MCF 10A (cell line): ENCODE measurements at regions of chr9 and their contacts with region 1.

Region 1: GRCh38 chr9:33510264-33511183 is 13.5 kb upstream of the ANKRD18B start:
- DNase-seq: peak; percentile 46
- H3K4me3 Mint-ChIP-seq: peak overlapping the region; percentile 76
- H3K27ac Mint-ChIP-seq: peak overlapping the region; percentile 98
- H3K4me1 Mint-ChIP-seq: peaks cover 21% of the 10 kb centered on the region
- H3K27me3 Mint-ChIP-seq: no peaks in the 10 kb centered on the region
- CTCF ChIP-seq: no peak

Region 2: DNA sequence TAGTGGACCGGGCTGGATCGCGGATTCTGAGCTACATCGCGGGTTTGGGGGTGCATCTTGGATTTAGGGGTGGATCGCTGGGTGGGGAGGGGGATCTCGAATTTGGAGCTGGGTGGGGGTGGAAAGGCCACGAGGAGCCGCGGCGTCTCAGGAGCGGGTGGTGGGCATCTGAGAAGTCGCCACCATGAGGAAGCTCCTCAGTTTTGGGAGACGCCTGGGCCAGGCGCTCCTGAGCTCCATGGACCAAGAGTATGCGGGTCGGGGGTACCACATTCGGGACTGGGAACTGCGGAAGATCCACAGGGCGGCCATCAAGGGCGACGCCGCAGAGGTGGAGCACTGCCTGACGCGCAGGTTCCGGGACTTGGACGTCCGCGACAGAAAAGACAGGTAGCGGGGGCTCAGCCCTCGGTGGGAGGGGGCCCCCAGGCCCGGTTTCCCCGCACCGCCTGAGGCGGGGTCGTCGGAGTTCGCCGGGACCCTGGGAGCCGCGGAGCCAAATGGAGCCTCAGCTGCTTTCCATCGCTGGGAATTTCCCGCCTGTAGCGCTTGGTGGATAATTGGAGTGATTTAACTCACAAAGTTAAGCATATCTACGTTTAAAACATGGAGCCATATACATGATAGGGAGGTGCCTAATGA is 13.9 kb after region 1 on chr9:
- CTCF ChIA-PET with region 1: no interaction called
- POLR2A ChIA-PET with region 1: interaction called, 17 read pairs
- intact Hi-C with region 1: no loop called
- DNase-seq: peak; percentile 33
- H3K4me3 Mint-ChIP-seq: peak overlapping the region; percentile 96
- H3K27ac Mint-ChIP-seq: peak overlapping the region; percentile 76
- H3K4me1 Mint-ChIP-seq: no peaks in the 10 kb centered on the region
- H3K27me3 Mint-ChIP-seq: no peaks in the 10 kb centered on the region
- CTCF ChIP-seq: no peak